ENCODE measurements at regions of chr20 and their contacts with region 1.

Region 1: GRCh38 chr20:19212821-19213502 is 520 bp downstream of the SLC24A3 start:
- DNase-seq: peak; percentile 84 to 92
- ATAC-seq: peak; percentile 84
- H3K4me3 ChIP-seq: peak overlapping the region; percentile 72 to 97
- H3K27ac ChIP-seq: peak overlapping the region in 1 of 2 donors; percentile 58
- H3K4me1 ChIP-seq: peaks cover 0 to 4% of the 10 kb centered on the region in 2 donors
- H3K27me3 ChIP-seq: no peaks in the 10 kb centered on the region

Region 2: DNA sequence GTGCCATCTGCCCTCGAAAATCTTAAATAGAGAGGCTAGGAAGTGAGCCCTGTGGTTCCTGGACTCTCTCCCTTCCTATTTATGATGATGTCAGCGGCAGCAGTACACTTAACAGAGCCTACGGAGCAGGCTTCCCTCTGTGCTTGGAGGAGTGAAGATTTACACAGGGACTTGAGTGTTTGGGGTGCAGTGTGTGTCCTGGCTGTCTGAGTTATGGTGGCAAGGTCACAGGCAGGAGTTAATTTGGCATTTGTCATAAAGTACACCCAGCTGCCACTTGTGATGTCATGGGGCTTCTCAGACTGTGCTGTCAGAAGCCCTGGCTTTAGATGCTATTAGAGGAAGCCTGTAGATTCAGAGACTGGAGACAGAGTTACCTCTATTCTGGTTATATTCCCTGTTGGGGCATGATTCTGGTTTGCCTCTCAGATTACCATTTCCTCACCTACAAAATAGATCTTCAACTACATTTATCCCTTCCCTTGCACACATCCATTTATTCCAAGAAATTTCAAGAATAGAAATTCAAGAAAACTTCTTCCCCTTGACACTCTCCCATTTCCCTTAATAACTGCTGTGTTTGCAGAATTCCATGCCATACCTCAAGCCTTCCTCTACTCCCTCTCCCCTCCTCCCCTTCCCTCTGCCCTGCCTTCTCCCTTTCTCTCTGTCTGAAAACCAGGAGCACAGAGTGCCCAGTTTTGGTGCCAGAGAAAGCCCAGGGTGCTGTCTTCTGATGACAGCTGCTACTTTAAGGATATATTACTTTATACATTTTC is 71.6 kb after region 1 on chr20:
- intact Hi-C with region 1: loop called in 1 of 2 experiments (anchors 10 kb)
- DNase-seq: no peak
- ATAC-seq: peak; percentile 25
- H3K4me3 ChIP-seq: no peak overlapping the region
- H3K27ac ChIP-seq: no peak overlapping the region
- H3K4me1 ChIP-seq: no peaks in the 10 kb centered on the region
- H3K27me3 ChIP-seq: no peaks in the 10 kb centered on the region

Region 3: GRCh38 chr20:19376451-19377229 is 163.7 kb after region 1 on chr20:
- intact Hi-C with region 1: loop called in 1 of 2 experiments (anchors 10 kb)
- DNase-seq: no peak
- ATAC-seq: peak; percentile 71
- H3K4me3 ChIP-seq: no peak overlapping the region
- H3K27ac ChIP-seq: no peak overlapping the region
- H3K4me1 ChIP-seq: peaks cover 0 to 5% of the 10 kb centered on the region in 2 donors
- H3K27me3 ChIP-seq: no peaks in the 10 kb centered on the region

Region 4: GRCh38 chr20:19497064-19497463 is 284.1 kb after region 1 on chr20:
- intact Hi-C with region 1: loop called (anchors 2 to 5 kb)
- DNase-seq: no peak
- ATAC-seq: peak; percentile 49
- H3K4me3 ChIP-seq: no peak overlapping the region
- H3K27ac ChIP-seq: peak overlapping the region; percentile 91 to 96
- H3K4me1 ChIP-seq: peaks cover 9% of the 10 kb centered on the region in 2 donors
- H3K27me3 ChIP-seq: no peaks in the 10 kb centered on the region

Region 5: GRCh38 chr20:19583532-19584175 is 370.7 kb after region 1 on chr20:
- intact Hi-C with region 1: loop called in 1 of 2 experiments (anchors 2 kb)
- DNase-seq: peak; percentile 74 to 91
- ATAC-seq: peak; percentile 66
- H3K4me3 ChIP-seq: no peak overlapping the region
- H3K27ac ChIP-seq: no peak overlapping the region
- H3K4me1 ChIP-seq: peaks cover 0 to under 1% of the 10 kb centered on the region in 2 donors
- H3K27me3 ChIP-seq: no peaks in the 10 kb centered on the region